Activated CD4-positive, alpha-beta memory T cell treated with anti-CD3 and anti-CD28 coated beads, Interleukin-2, amount 10 ng/mL, durations not matched to agents 7 days and 5 days (primary cell): ENCODE measurements at regions of chr11 and their contacts with region 1.

Region 1: DNA sequence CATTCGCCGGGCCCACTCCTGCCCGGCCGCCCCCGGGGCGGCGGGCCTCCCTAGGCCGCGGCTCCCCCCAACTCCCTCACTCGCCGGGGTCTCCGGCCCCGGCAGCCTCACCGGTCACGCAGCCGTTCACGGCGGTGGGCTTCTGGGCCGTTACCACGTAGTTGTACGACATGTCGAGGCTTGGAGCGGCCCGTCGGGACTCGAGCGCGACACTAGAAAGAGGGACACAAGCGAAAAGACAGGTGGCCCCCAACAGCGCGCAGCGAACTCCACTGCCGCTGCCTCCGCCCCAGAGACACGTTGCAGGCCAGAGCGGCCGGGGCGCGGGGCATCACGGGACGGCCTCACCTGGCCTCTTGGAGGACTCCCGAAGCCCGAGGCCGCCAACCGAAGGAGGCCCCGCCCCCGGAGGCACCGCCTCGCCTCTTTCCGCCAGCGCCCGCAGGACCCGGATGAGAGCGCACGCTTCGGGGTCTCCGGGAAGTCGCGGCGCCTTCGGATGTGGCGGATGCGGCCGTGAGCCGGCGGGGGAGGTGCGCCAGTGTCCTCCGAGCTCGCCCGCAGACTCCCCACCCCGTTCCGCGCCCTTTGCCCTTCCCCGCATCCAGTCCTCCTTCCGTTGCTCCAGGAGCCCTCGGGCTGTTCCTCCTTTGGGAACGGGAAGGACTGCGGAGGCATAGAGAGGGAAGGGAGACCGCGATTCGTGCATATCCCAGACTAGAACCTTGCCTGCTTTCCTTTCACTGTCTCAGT is at the starts of genes DDB1 and TKFC:
- DNase-seq: peak; percentile 98
- H3K4me3 Mint-ChIP-seq: peak within 1 kb of the TSS; percentile 99
- H3K27ac Mint-ChIP-seq: peak within 1 kb of the TSS; percentile 98
- H3K4me1 Mint-ChIP-seq: peaks cover 78% of the 10 kb centered on the region
- H3K27me3 Mint-ChIP-seq: no peaks in the 10 kb centered on the region
- total RNA-seq, gene DDB1: 166 to 174 TPM
- total RNA-seq, gene TKFC: 49.6 to 51.5 TPM

Region 2: DNA sequence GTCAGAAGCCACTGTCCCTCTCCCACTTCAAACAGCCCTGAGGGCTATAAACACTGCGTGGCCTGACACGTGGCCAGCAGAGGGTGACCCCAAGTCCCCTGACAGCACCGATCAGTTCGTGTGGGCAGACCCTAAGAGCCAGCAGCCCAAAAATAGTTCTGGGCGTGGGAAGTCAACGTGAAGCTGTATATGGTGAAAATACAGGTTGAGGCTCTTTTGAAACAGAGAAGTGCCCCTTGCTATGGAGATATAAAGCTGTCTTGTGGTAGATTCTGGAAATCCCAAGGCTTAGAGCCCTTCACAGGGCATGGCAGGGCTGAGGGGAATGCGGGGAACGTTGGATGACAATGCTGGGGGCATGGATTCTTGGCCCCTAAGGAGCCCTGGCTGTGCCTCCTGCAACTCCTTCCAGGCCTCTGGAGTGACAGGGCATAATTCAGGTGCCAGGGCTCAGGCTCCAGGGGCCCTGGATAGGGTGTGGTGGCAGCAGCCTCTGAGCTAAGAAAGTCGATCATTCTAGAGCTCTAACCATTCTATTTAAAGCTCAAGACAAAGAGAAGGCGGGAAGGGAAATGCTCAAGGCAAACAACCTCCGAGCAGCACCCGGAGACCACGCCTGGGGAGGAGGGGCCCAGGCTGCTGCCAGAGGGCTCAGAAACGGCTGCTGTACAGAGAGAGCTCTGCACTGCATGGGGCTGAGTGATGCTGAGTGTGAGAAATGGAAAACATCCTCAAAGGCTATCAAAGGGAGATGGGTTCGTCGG is 291.0 kb before region 1 on chr11:
- CTCF ChIA-PET with region 1: no interaction called
- POLR2A ChIA-PET with region 1: no interaction called
- DNase-seq: peak; percentile 93
- H3K4me3 Mint-ChIP-seq: peak overlapping the region; percentile 76
- H3K27ac Mint-ChIP-seq: peak overlapping the region; percentile 97
- H3K4me1 Mint-ChIP-seq: peaks cover 72% of the 10 kb centered on the region
- H3K27me3 Mint-ChIP-seq: no peaks in the 10 kb centered on the region

Region 3: DNA sequence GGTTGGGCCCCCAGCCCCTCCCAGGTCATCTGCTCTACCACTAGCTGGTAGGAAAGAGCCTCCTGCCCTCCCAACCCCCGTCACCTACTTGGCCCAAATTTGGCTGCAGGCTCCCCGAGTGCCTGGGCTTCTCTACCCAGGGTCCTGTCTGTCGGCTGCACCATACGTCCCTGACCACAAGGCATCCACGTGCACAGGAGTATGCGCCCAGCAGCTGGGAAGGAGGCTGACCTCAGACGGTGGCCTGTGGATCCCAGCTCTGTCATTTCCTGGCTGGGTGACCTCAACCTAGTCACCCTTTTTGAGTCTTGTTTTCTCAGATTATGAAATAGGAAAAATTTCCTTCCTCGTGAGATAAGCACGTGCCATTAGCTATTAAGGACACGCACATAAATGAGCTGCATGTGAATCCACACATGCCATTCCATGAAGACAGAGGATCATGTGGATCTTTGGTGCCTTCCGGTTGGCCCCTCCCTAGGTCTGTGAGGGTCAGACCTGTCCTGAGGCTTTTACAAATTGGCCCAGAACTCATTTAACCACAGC is 15.0 kb after region 1 on chr11:
- CTCF ChIA-PET with region 1: interaction called, 25 read pairs
- POLR2A ChIA-PET with region 1: interaction called, 7 read pairs
- DNase-seq: no peak
- H3K4me3 Mint-ChIP-seq: no peak overlapping the region
- H3K27ac Mint-ChIP-seq: no peak overlapping the region
- H3K4me1 Mint-ChIP-seq: peaks cover 2% of the 10 kb centered on the region
- H3K27me3 Mint-ChIP-seq: no peaks in the 10 kb centered on the region

Region 4: DNA sequence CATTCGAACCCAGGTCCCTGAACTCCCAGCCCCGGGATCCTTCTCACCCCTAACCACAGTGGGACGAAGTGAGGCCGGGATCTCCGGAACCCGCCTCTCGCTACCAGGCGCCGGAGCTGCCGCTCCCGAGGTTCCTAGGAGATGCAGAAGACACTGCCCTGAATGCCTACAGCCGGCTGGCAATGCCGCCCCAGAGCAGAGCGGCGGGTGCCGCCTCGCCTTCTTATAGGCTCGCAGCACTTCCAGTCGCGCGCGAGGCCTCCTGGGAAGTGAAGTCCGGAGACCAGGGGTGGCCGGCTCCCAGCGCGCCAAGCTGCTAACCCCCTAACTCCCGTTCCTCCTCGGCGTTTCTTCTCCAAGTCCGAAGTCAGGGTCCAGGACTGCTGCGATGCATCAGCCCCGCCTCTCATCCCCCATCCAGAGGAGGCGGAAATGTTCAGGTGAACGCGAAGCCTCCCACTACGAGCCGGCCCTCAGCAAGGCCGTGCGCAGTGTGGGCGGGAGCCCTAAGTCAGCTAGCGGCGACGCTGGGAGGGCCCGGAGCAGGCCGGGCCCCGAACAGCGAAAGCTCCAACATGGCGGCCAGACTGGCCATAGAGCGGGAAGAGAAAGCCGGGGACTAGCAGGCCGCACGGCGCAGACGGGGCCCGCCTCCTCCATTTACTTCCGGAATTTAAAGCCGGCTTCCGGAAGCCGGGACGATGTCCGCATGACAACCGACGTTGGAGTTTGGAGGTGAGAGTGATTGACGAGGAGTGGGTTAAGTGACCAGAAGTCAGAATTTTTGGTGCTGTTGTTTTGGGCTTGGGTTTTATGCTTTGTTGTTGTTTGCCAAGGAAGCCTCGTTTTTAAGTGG is 28.9 kb after region 1 on chr11 and contains the starts of genes CYB561A3 and TMEM138:
- CTCF ChIA-PET with region 1: interaction called, 153 read pairs
- POLR2A ChIA-PET with region 1: interaction called, 118 read pairs
- DNase-seq: peak; percentile 93
- H3K4me3 Mint-ChIP-seq: peak within 1 kb of the TSS; percentile 98
- H3K27ac Mint-ChIP-seq: peak within 1 kb of the TSS; percentile 97
- H3K4me1 Mint-ChIP-seq: peaks cover 43% of the 10 kb centered on the region
- H3K27me3 Mint-ChIP-seq: no peaks in the 10 kb centered on the region
- total RNA-seq, gene CYB561A3: 36.0 to 38.6 TPM
- total RNA-seq, gene TMEM138: 45.5 to 50.0 TPM

Region 5: GRCh38 chr11:61378713-61379313 is 45.8 kb after region 1 on chr11:
- CTCF ChIA-PET with region 1: interaction called, 289 read pairs
- POLR2A ChIA-PET with region 1: interaction called, 48 read pairs
- DNase-seq: no peak
- H3K4me3 Mint-ChIP-seq: no peak overlapping the region
- H3K27ac Mint-ChIP-seq: no peak overlapping the region
- H3K4me1 Mint-ChIP-seq: no peaks in the 10 kb centered on the region
- H3K27me3 Mint-ChIP-seq: no peaks in the 10 kb centered on the region

Region 6: GRCh38 chr11:61392981-61393595 is 60.1 kb after region 1 on chr11:
- CTCF ChIA-PET with region 1: interaction called, 289 read pairs
- POLR2A ChIA-PET with region 1: interaction called, 26 read pairs
- DNase-seq: no peak
- H3K4me3 Mint-ChIP-seq: peak overlapping the region; percentile 80
- H3K27ac Mint-ChIP-seq: peak overlapping the region; percentile 85
- H3K4me1 Mint-ChIP-seq: peaks cover 25% of the 10 kb centered on the region
- H3K27me3 Mint-ChIP-seq: no peaks in the 10 kb centered on the region

Region 7: DNA sequence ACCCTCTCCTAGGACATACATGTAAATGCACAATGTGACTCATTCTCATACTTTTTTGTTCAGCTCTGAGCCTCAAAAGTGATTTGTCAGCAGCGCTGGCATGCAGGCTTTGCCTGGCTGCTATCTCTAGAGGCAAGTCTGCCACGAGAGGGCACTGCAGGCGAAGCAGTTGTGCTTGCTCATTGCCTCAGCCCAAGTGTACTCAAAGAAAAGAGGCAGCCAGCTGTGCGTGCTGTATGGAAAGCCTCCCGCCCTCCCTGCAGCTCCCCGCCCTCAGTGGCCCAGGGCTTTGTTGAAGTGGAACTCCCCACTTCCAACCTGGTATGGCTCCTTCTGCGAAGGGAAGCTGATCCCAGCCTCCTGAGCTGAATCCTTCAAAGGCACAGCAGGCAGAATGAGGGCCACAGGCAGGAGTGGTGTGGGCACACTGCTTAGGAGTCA is 113.3 kb after region 1 on chr11:
- CTCF ChIA-PET with region 1: interaction called, 22 read pairs
- POLR2A ChIA-PET with region 1: interaction called, 3 read pairs
- DNase-seq: peak; percentile 86
- H3K4me3 Mint-ChIP-seq: no peak overlapping the region
- H3K27ac Mint-ChIP-seq: peak overlapping the region; percentile 7
- H3K4me1 Mint-ChIP-seq: peaks cover 19% of the 10 kb centered on the region
- H3K27me3 Mint-ChIP-seq: no peaks in the 10 kb centered on the region